AG04450 (cell line): ENCODE measurements at regions of chr2 and their contacts with region 1.

Region 1: DNA sequence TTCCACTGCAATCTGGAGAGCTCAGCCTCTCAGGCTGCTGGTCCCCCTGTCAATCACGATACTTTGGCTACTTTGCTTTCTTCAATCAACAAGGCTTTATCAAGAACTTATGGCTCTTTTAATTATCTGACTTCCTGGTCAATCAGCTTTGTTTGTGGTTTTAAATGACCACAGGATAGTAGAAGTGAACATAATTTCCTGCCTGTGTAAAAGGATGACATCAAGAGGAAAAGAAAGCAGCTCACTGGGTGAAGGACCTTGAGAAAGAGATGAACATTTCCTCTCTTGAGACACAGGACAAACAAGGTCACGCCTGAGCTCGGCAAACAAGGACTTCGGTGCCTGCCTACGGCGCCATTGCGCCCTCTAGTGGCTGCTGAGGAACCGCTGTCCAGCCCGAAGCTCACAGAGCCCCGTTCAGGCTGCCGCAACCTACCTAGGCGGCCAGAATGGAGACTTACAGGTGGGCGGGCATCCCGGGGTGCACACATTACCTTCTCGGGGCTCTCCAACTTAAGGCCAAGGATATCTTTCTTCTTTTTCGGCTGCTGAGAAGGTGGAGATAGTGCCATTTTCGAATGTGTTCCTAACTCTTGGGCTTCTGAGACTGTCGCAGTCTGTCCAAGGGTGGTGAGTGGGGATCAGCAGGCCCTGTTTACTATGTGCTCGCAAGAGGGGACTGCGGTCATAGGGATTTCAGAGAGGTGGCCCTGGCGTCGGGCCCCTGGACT is 54.0 kb downstream of the IL1RL2 start:
- DNase-seq: peak; percentile 86
- H3K4me3 ChIP-seq: no peak overlapping the region
- H3K27ac ChIP-seq: peak overlapping the region; percentile 49
- H3K27me3 ChIP-seq: no peaks in the 10 kb centered on the region
- CTCF ChIP-seq: peak; percentile 99

Region 2: DNA sequence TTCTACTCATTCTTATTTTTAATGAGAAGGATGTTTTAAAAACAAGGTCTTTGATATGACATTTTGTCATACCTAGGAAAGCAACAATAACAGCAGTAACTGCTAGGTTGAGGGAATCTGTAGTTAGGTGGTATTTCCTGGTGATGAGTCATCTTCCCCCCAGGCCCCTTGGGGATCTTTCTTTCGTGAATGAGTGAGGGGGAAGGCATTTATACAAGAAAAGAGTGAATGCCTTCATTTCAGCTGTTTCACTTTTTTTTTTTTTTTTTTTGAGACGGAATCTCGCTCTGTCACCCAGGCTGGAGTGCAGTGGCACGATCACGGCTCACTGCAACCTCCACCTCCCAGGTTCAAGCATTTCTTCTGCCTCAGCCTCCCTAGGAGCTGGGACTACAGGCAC is 434.7 kb before region 1 on chr2:
- CTCF ChIA-PET with region 1: no interaction called
- POLR2A ChIA-PET with region 1: no interaction called
- DNase-seq: no peak
- H3K4me3 ChIP-seq: no peak overlapping the region
- H3K27ac ChIP-seq: no peak overlapping the region
- H3K27me3 ChIP-seq: no peaks in the 10 kb centered on the region
- CTCF ChIP-seq: no peak

Region 3: GRCh38 chr2:101858268-101858667 is 382.5 kb before region 1 on chr2:
- CTCF ChIA-PET with region 1: no interaction called
- POLR2A ChIA-PET with region 1: no interaction called
- DNase-seq: no peak
- H3K4me3 ChIP-seq: no peak overlapping the region
- H3K27ac ChIP-seq: no peak overlapping the region
- H3K27me3 ChIP-seq: no peaks in the 10 kb centered on the region
- CTCF ChIP-seq: no peak

Region 4: GRCh38 chr2:102005989-102006885 is 234.6 kb before region 1 on chr2:
- CTCF ChIA-PET with region 1: interaction called, 99 read pairs
- POLR2A ChIA-PET with region 1: interaction called, 5 read pairs
- DNase-seq: no peak
- H3K4me3 ChIP-seq: no peak overlapping the region
- H3K27ac ChIP-seq: no peak overlapping the region
- H3K27me3 ChIP-seq: peaks cover 9% of the 10 kb centered on the region
- CTCF ChIP-seq: peak; percentile 76

Region 5: DNA sequence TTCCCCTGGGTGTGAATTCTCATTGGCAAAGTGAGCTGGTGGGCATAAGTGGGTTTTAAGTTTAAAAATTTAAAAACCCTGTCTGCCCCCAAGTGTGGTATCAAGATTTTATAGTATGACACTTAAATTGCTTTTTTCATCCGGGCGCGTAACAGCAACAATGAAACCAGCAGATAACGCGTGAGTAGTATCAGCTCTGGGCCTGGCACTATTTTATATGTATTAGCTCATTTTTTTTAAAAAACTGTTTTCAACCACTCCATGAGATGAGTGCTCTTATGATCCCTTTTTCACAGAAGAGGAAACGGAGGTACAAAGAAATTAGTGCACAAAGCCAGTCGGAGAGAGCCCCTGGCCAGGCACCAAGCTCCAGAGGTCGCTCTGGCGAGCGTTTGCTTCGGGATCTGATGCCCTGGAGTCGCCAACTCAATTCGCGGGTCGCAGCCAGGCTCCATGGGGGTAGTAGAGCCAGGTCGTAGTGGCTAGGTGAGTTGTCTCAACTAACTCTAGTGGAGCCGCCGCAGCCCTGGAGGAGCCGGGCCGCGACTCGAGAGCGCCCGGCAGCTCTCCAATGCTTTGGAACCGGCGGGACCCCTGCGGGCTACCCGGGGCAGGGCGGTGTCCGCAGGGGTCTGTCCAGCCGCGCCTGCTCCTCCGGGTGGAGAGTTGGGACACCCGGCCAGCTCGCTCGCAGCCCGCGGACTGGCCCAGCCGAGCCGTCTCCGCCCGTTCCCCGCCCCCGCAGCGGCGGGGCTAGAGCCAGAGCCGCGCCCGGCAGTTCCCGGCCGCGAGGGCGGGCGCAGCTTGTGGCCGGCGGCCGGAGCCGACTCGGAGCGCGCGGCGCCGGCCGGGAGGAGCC is 98.6 kb before region 1 on chr2 and contains the start of gene IL1R1:
- CTCF ChIA-PET with region 1: interaction called, 11 read pairs
- POLR2A ChIA-PET with region 1: interaction called, 8 read pairs
- DNase-seq: no peak
- H3K4me3 ChIP-seq: peak within 1 kb of the TSS; percentile 88
- H3K27ac ChIP-seq: peak within 1 kb of the TSS; percentile 88
- H3K27me3 ChIP-seq: no peaks in the 10 kb centered on the region
- CTCF ChIP-seq: no peak
- polyA plus RNA-seq, gene IL1R1: 88.8 and 102 TPM in 2 replicates

Region 6: DNA sequence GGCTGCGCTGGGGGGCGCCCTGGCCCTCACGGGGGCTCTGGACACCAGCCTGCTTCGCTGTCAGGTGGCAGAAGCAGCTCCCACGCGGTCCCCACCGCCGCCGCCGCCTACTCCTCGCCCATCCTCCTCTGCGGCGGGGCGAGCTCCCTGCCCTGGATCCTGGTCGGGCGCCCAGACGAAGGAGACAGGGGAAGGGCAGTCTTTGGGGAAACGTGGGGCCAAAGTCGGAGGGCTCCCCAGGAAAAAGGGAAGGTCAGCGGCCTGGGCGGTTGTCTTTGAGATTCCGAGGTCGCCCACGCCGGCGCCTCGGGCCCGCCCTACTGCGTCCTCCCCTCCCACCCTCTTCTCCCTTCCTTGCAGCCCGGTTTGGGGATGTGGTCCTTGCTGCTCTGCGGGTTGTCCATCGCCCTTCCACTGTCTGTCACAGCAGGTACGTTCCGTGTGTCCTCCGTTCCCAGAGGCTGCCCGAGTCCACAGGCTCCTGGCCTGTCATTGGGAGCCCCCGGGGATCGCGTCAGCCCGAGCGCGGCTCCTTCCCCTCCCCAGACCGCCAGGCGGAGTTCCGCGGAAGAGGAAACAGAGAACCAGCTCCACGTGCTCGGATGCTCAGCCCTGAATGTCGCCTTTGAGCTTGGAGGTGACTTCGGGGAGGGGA is 53.2 kb before region 1 on chr2:
- CTCF ChIA-PET with region 1: interaction called, 32 read pairs
- POLR2A ChIA-PET with region 1: no interaction called
- DNase-seq: no peak
- H3K4me3 ChIP-seq: peak overlapping the region; percentile 61
- H3K27ac ChIP-seq: no peak overlapping the region
- H3K27me3 ChIP-seq: no peaks in the 10 kb centered on the region
- CTCF ChIP-seq: peak; percentile 52

Region 7: GRCh38 chr2:102229141-102229769 is 11.6 kb before region 1 on chr2:
- CTCF ChIA-PET with region 1: no interaction called
- POLR2A ChIA-PET with region 1: no interaction called
- DNase-seq: no peak
- H3K4me3 ChIP-seq: no peak overlapping the region
- H3K27ac ChIP-seq: no peak overlapping the region
- H3K27me3 ChIP-seq: no peaks in the 10 kb centered on the region
- CTCF ChIP-seq: no peak

Region 8: DNA sequence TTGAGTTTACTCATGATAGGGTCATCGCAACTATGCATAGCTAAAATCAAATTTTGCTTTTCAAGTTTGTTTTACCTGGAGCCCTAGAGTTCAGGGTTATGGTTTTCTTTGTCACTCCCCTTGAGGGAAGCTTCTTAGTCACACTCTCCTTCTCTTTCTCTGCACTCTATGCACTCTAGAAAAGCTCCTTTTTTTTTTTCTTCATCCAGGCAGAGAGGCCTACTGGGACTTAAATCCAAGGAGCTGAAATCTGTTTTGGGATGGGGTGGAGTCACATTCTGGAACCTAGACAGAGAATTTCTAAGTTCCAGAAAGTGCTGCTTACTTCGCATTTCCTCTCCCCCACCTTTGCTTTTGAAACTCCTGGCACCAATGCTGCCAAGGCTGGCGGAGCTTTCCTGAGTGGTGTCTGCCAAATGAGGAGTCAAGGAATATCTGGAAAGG is 95.7 kb after region 1 on chr2:
- CTCF ChIA-PET with region 1: interaction called, 13 read pairs
- POLR2A ChIA-PET with region 1: no interaction called
- DNase-seq: no peak
- H3K4me3 ChIP-seq: no peak overlapping the region
- H3K27ac ChIP-seq: no peak overlapping the region
- H3K27me3 ChIP-seq: no peaks in the 10 kb centered on the region
- CTCF ChIP-seq: no peak